Activated CD4-positive, alpha-beta T cell treated with anti-CD3 and anti-CD28 coated beads for 36 hours (primary cell): ENCODE measurements at regions of chr13 and their contacts with region 1.

Region 1: DNA sequence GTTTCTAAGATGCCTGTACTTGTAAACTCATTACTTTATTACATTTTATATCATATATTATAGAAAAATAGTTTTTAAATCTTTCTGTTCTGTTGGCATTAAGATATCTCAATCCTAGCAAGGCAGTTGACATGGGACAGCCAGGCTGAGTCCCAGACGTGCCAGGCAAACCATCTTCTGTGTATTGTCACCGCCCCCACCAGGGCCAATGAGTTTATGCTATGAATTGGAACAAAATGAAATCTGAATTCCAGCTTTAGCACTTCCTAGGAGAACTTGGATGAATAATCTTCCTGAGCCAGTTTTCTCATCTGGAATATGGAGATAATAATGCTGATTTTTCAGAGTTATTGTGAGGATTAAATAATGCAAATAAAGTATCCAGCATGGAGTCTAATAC is 79.9 kb upstream of the GSX1 start:
- DNase-seq: peak; percentile 34
- ATAC-seq: no peak
- H3K4me3 Mint-ChIP-seq: no peak overlapping the region
- H3K27ac Mint-ChIP-seq: no peak overlapping the region
- H3K4me1 Mint-ChIP-seq: no peaks in the 10 kb centered on the region
- H3K27me3 Mint-ChIP-seq: peaks cover 5% of the 10 kb centered on the region

Region 2: GRCh38 chr13:26037301-26037700 is 1675.1 kb before region 1 on chr13:
- CTCF ChIA-PET with region 1: no interaction called
- POLR2A ChIA-PET with region 1: no interaction called
- intact Hi-C with region 1: no loop called
- DNase-seq: peak; percentile 54
- ATAC-seq: peak; percentile 39
- H3K4me3 Mint-ChIP-seq: no peak overlapping the region
- H3K27ac Mint-ChIP-seq: no peak overlapping the region
- H3K4me1 Mint-ChIP-seq: no peaks in the 10 kb centered on the region
- H3K27me3 Mint-ChIP-seq: peaks cover 7% of the 10 kb centered on the region

Region 3: GRCh38 chr13:27556109-27556508 is 156.3 kb before region 1 on chr13:
- CTCF ChIA-PET with region 1: no interaction called
- POLR2A ChIA-PET with region 1: no interaction called
- intact Hi-C with region 1: loop called in 1 of 2 experiments (anchors 10 kb)
- DNase-seq: peak; percentile 10
- ATAC-seq: no peak
- H3K4me3 Mint-ChIP-seq: no peak overlapping the region
- H3K27ac Mint-ChIP-seq: no peak overlapping the region
- H3K4me1 Mint-ChIP-seq: peaks cover under 1% of the 10 kb centered on the region
- H3K27me3 Mint-ChIP-seq: no peaks in the 10 kb centered on the region

Region 4: GRCh38 chr13:28110414-28110813 is 398.0 kb after region 1 on chr13:
- CTCF ChIA-PET with region 1: no interaction called
- POLR2A ChIA-PET with region 1: no interaction called
- intact Hi-C with region 1: no loop called
- DNase-seq: no peak
- ATAC-seq: peak; percentile 16
- H3K4me3 Mint-ChIP-seq: no peak overlapping the region
- H3K27ac Mint-ChIP-seq: no peak overlapping the region
- H3K4me1 Mint-ChIP-seq: no peaks in the 10 kb centered on the region
- H3K27me3 Mint-ChIP-seq: no peaks in the 10 kb centered on the region